A673 (cell line): ENCODE measurements at regions of chr4 and their contacts with region 1.

Region 1: DNA sequence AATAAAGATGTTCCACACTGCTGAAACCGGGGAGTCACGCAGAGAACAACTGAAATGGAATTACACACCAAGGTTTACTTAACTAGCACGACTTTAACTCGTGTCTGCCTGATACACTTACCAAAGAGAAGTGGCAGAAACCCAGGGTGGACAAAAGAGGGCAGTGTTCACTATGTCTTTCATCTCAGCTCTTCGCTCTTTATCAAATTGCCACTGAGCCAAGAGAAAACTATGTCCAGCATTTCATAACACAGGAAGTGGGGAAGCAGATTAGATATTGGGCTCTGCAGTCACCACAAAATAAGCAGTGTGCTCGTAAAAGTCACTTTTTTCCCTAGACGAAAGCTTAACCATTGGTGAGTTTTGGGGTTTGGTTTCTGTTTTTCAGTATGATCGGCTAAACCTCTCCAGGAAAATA is 155.7 kb downstream of the CHIC2 start:
- DNase-seq: peak; percentile 69
- H3K4me3 ChIP-seq: no peak overlapping the region
- H3K27ac ChIP-seq: no peak overlapping the region
- H3K4me1 ChIP-seq: peaks cover 4% of the 10 kb centered on the region
- H3K27me3 ChIP-seq: peaks cover 11% of the 10 kb centered on the region
- CTCF ChIP-seq: peak; percentile 62

Region 2: DNA sequence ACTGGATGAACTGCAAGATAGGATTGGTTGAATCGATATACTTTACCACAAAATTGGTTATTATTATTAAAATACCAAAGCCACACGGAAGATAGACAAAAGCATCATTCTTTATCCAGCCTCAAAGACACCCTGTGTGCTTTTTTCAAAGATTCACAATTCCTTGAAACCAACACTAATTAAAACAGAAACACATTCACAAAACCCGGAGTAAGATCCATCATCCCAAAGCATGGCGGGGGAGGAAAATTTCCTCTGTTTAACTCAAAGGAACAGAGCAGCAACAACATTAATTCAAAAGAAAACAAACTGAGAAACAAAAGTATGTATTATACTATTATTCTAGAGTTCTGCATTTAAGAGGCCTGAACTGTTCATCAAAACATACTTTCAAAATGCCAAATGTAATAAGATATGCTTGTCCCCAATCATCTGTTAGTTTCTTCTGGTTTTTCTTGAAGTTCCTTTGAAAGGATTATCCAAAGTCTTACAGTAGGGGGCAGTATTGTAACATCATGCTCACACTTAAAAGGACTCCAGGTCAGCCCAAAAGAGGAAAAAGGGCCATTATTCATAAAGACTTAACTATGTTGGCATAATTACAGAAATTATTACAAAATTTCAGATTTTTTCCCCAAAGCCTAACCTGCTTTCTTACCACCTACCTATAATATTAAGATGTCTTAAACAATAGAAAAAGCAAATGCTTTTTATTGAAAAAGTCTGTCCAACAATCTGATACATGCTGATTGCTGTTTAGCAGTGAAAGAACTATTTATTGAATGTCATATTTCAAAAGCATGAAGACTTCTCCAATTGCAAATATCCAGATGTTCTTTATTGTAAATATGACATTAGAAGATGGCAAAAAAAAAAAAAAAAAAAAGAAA is 711.5 kb before region 1 on chr4:
- CTCF ChIA-PET with region 1: interaction called, 10 read pairs
- POLR2A ChIA-PET with region 1: no interaction called
- intact Hi-C with region 1: loop called (anchors 5 kb)
- DNase-seq: peak; percentile 77
- H3K4me3 ChIP-seq: peak overlapping the region; percentile 18
- H3K27ac ChIP-seq: no peak overlapping the region
- H3K4me1 ChIP-seq: peaks cover 9% of the 10 kb centered on the region
- H3K27me3 ChIP-seq: peaks cover 32% of the 10 kb centered on the region
- CTCF ChIP-seq: peak; percentile 61

Region 3: DNA sequence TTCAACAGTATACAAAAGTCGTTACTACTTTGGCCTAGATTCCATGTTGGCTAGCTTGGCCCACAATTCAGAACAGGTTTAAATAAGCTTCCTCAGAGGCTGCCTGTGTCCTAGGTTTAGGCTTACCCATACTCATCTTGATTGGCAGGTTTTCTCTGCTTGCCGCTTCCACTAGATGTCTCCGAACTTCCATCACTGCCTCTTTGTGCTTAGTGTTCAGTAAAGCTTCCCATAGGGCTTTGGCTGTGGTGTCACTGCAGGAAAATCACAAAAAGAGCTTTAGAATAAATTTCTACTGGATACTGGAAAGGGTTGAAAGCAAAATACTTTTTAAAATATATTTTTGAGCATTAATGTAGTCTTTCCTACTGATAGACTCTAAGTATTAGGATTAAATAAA is 595.2 kb before region 1 on chr4:
- CTCF ChIA-PET with region 1: no interaction called
- POLR2A ChIA-PET with region 1: no interaction called
- intact Hi-C with region 1: loop called (anchors 10 kb)
- DNase-seq: peak; percentile 60
- H3K4me3 ChIP-seq: no peak overlapping the region
- H3K27ac ChIP-seq: no peak overlapping the region
- H3K4me1 ChIP-seq: peaks cover 17% of the 10 kb centered on the region
- H3K27me3 ChIP-seq: no peaks in the 10 kb centered on the region
- CTCF ChIP-seq: peak; percentile 54

Region 4: DNA sequence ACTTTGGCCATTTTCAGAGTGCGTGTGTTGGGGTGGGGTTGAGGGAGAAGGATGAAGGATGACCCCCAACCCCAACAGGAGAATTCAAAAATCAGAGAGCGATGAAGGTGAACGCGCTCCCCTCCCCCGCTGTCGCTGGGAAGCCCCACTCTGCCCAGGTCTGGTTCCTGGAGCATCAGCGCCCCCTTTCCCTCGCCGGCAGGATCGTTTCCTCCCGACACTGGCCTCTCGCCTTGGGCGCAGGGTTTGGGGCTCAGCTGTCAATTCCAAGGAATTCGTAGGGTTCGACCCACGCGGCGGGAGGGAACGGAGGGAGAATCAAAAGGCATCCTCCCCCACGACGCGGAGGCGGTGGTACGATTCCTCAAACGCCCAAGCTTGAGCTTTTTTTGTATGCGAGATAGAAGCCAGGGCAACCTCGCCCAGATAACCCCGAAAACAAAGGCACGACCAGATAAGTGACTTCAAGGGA is 319.4 kb after region 1 on chr4:
- CTCF ChIA-PET with region 1: no interaction called
- POLR2A ChIA-PET with region 1: no interaction called
- intact Hi-C with region 1: loop called (anchors 2 kb)
- DNase-seq: peak; percentile 37
- H3K4me3 ChIP-seq: no peak overlapping the region
- H3K27ac ChIP-seq: no peak overlapping the region
- H3K4me1 ChIP-seq: no peaks in the 10 kb centered on the region
- H3K27me3 ChIP-seq: peaks cover 82% of the 10 kb centered on the region
- CTCF ChIP-seq: peak; percentile 61

Region 5: DNA sequence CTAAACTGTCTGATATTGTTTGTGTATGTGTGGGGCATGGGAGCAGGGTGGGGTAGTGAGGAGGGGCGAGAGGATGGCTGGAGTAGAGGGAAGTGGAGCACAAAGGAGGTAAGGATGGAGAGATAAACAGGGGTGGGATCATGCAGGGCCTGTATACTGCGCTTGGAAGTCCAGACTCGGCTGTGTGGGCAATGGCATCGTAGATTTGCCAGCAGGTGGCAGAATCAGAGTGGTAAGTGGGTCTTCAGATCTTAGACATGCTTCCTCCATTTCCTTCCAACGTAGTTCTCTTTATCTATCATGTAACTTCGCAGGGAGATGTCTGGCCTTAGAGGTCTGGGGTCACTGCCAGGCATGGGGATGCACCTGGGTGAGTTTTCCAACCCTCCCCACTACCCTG is 475.9 kb after region 1 on chr4:
- CTCF ChIA-PET with region 1: no interaction called
- POLR2A ChIA-PET with region 1: no interaction called
- intact Hi-C with region 1: no loop called
- DNase-seq: peak; percentile 29
- H3K4me3 ChIP-seq: no peak overlapping the region
- H3K27ac ChIP-seq: no peak overlapping the region
- H3K4me1 ChIP-seq: no peaks in the 10 kb centered on the region
- H3K27me3 ChIP-seq: no peaks in the 10 kb centered on the region
- CTCF ChIP-seq: peak; percentile 51